ENCODE measurements at regions of chr1 and their contacts with region 1.

Region 1: DNA sequence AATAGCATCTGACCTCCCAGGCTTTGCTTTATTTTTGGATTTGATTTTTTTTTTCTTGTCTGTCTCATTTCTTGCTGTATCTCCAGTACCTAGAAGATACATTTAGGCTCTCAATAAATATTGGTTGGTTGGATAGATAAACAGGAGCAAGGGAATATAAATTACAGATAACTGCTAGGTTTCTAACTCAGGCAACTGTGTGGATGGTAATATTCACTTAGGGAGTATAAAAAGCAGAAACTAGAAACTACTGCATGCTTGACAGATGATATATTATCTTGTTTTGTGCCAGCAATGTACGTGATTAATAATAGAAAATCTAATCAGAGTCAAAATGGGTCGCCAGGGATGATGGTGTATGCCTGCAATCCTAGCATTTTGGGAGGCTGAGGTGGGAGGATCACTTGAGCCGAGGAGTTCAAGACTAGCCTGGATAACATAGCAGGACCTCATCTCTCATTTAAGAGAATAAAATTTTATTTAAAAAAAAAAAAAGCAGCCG is 31.0 kb upstream of the TARS2 start:
- DNase-seq: no peak
- ATAC-seq: no peak
- H3K4me3 ChIP-seq: no peak overlapping the region
- H3K27ac ChIP-seq: no peak overlapping the region
- H3K4me1 ChIP-seq: no peaks in the 10 kb centered on the region
- H3K27me3 ChIP-seq: no peaks in the 10 kb centered on the region
- CTCF ChIP-seq: no peak
- POLR2A ChIP-seq: no peak

Region 2: GRCh38 chr1:150507905-150508854 is 52.0 kb after region 1 on chr1 and contains the start of gene ECM1:
- intact Hi-C with region 1: no loop called
- DNase-seq: peak in 4 of 5 donors; percentile 70 to 79 (median 75)
- ATAC-seq: peak; percentile 56 to 94 (median 88)
- H3K4me3 ChIP-seq: peak within 1 kb of the TSS in 11 of 12 donors; percentile 4 to 63 (median 47)
- H3K27ac ChIP-seq: peak within 1 kb of the TSS; percentile 57 to 90 (median 79)
- H3K4me1 ChIP-seq: peaks cover 0 to 31% (median 9%) of the 10 kb centered on the region in 12 donors
- H3K27me3 ChIP-seq: no peaks in the 10 kb centered on the region
- CTCF ChIP-seq: no peak
- POLR2A ChIP-seq: peak in 1 of 2 donors; percentile 70
- total RNA-seq, gene ECM1: 10.9 to 35.3 (median 15.4) TPM

Region 3: GRCh38 chr1:150642296-150642695 is 186.1 kb after region 1 on chr1:
- intact Hi-C with region 1: no loop called
- DNase-seq: no peak
- ATAC-seq: no peak
- H3K4me3 ChIP-seq: no peak overlapping the region
- H3K27ac ChIP-seq: no peak overlapping the region
- H3K4me1 ChIP-seq: no peaks in the 10 kb centered on the region
- H3K27me3 ChIP-seq: no peaks in the 10 kb centered on the region
- CTCF ChIP-seq: no peak
- POLR2A ChIP-seq: no peak

Region 4: DNA sequence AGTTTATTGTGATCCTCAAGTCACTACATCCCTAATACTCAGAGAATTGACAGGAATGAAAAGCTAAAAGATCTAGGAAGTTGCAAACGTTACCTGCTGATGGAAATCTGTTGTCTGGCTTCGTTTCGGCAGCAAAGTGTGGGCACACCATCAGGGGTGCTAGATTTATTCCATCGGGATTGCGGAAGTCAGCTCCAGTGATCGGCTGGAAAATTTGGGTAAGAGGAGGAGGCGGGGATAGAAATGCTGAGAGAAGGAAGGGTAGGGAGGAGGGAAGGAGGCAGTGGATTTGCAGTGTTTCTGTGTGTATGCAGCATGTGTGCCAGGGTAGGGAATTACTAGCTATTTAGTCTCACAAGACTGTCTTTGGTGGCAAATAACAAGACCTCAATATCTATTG is 351.9 kb after region 1 on chr1 and contains the start of gene CTSK:
- intact Hi-C with region 1: loop called in 4 of 10 experiments (anchors 10 kb)
- DNase-seq: peak in 1 of 5 donors; percentile 17
- ATAC-seq: peak in 3 of 4 donors; percentile 52 to 65 (median 64)
- H3K4me3 ChIP-seq: peak within 1 kb of the TSS in 9 of 12 donors; percentile 16 to 56 (median 34)
- H3K27ac ChIP-seq: peak within 1 kb of the TSS in 6 of 12 donors; percentile 10 to 54 (median 28)
- H3K4me1 ChIP-seq: peaks cover 0 to 23% (median 1%) of the 10 kb centered on the region in 12 donors
- H3K27me3 ChIP-seq: no peaks in the 10 kb centered on the region
- CTCF ChIP-seq: no peak
- POLR2A ChIP-seq: no peak
- total RNA-seq, gene CTSK: 2.1 to 17.9 (median 6.1) TPM